AG04450 (cell line): ENCODE measurements at regions of chr11 and their contacts with region 1.

Region 1: DNA sequence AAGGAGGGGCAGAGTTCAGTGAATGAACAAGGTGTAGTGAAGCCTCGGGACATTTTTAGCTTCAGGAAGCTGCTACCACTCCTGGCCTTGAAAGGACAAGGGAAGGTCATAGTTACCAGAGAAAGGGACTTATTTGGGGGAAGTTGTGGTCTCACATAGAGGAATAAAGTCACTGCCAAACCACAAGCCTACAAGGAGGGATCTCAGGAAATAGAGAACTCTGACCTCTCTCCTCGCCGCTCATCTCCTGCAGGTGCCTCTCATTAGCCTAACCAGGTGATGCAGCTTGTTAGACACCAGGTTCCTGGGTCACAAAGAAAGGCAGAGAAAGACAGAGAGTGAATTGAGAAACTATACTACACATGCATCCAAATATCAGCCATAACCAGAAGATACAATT is 14.3 kb upstream of the TOLLIP start:
- DNase-seq: no peak
- H3K4me3 ChIP-seq: no peak overlapping the region
- H3K27ac ChIP-seq: no peak overlapping the region
- H3K27me3 ChIP-seq: peaks cover 4% of the 10 kb centered on the region
- CTCF ChIP-seq: no peak

Region 2: GRCh38 chr11:890794-891540 is 432.8 kb before region 1 on chr11:
- CTCF ChIA-PET with region 1: no interaction called
- POLR2A ChIA-PET with region 1: interaction called, 11 read pairs
- DNase-seq: no peak
- H3K4me3 ChIP-seq: no peak overlapping the region
- H3K27ac ChIP-seq: no peak overlapping the region
- H3K27me3 ChIP-seq: no peaks in the 10 kb centered on the region
- CTCF ChIP-seq: no peak

Region 3: DNA sequence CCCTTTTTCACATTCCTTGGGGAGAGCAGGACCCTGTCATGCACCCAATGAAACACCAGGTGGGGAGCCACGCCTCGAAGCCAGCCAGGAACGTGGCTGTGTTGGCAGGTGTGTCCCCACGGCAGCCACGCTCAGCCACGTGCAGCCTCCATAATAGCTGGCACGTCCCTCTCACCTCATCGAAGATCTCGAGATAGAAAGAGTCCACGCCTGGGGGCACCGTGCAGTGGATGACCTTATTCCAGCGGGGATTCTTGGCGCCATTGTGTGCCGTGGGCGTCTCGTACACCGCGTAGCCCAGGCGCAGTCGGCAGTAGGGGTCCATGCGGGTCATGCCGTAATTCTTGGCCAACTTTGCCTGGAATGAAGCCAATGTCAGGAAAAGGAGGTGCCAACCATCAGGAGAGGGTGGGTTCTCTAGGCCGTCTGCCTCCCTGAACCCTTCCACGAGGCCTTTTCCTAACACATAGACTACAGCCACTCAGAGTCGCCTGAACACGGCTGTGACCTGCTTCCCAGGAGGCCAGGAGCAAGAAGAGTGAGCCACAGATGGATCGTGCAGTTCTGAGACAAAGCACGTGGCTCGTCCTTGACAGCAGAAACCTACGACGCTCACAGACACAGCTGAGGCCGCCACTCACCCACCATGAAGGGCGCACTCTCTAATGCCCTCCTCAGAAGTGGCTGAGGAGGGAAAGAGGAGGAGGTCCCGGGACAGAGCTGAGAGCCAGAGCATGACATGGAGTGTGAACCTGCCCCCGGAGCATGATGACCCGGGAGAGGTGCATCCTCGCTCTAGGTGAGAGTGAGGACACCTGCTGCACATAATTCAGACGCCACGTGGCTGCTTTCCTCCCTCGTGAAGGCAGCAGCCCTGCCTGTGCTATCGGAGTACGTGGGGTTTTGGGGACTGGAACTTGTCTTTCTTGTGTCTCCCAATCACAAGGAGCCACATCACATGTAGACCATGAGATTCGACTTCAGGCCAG is 33.4 kb before region 1 on chr11:
- CTCF ChIA-PET with region 1: no interaction called
- POLR2A ChIA-PET with region 1: no interaction called
- DNase-seq: no peak
- H3K4me3 ChIP-seq: no peak overlapping the region
- H3K27ac ChIP-seq: no peak overlapping the region
- H3K27me3 ChIP-seq: no peaks in the 10 kb centered on the region
- CTCF ChIP-seq: no peak

Region 4: DNA sequence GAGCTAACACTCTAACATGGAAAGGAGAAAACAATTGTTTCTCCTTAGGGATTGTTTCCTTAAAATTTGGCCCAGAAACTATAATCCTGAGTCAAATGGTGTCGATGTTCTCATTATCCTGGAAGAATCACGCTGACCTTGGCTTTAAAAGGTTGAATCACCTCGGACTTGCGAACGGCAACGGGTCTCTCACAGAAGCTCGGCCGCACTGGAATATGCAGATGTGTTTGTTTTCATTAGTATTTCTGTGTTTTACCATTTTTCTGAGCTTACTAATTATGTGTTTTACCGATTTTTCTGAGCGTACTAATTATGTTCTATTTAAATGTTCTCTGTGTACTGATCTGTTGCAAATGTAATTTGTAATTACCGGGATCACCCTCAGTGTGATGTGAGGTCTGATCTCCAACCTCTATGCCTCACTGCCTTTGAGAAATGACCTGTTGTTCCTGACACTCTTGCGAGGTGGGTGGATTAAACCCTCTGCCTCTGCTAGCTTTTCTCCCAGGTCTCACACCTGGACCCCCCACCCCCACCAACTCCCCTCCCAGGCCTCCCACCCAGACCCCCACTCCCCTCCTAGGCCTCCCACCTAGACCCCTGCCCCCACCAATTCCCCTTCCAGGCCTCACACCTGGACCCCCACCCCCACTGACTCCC is 27.6 kb after region 1 on chr11:
- CTCF ChIA-PET with region 1: no interaction called
- POLR2A ChIA-PET with region 1: no interaction called
- DNase-seq: no peak
- H3K4me3 ChIP-seq: no peak overlapping the region
- H3K27ac ChIP-seq: no peak overlapping the region
- H3K27me3 ChIP-seq: peaks cover 18% of the 10 kb centered on the region
- CTCF ChIP-seq: no peak